IMR-90 (cell line): ENCODE measurements at regions of chr5 and their contacts with region 1.

Region 1: GRCh38 chr5:175246242-175246888 is 197.6 kb downstream of the DRD1 start:
- DNase-seq: peak; percentile 98
- ATAC-seq: peak; percentile 94
- H3K4me3 ChIP-seq: no peak overlapping the region
- H3K27ac ChIP-seq: peak overlapping the region; percentile 66
- H3K4me1 ChIP-seq: peaks cover 4% of the 10 kb centered on the region
- H3K27me3 ChIP-seq: no peaks in the 10 kb centered on the region
- CTCF ChIP-seq: no peak
- POLR2A ChIP-seq: no peak
- RAD21 ChIP-seq: no peak

Region 2: DNA sequence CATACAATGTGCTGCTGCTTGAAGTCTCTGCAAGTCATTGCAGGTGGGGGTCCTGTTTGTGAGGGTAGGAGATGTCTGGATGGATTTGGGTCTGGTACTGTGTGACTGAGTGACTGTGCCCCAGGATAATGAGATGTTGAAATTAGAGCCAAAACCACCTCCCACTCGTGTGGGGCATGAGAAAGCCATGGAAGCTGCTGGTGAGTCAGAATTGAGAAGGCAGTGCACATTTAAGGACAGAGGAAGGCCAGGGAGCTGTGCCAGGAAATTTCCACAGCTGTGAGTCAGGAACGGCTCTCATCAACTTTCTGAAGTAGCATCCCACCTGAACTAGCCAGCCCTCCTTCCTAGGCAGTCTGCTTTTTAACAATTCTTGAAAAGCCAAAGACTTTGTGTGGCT is 32.2 kb before region 1 on chr5:
- CTCF ChIA-PET with region 1: interaction called, 4 read pairs
- POLR2A ChIA-PET with region 1: interaction called, 3 read pairs
- dilution Hi-C with region 1: no loop called
- in situ Hi-C with region 1: no loop called
- intact Hi-C with region 1: loop called (anchors 2 kb)
- DNase-seq: peak; percentile 97
- ATAC-seq: peak; percentile 84
- H3K4me3 ChIP-seq: no peak overlapping the region
- H3K27ac ChIP-seq: no peak overlapping the region
- H3K4me1 ChIP-seq: peaks cover 11% of the 10 kb centered on the region
- H3K27me3 ChIP-seq: no peaks in the 10 kb centered on the region
- CTCF ChIP-seq: no peak
- POLR2A ChIP-seq: no peak
- RAD21 ChIP-seq: no peak

Region 3: GRCh38 chr5:175344331-175345195 is 98.2 kb after region 1 on chr5:
- CTCF ChIA-PET with region 1: no interaction called
- POLR2A ChIA-PET with region 1: no interaction called
- dilution Hi-C with region 1: no loop called
- in situ Hi-C with region 1: no loop called
- intact Hi-C with region 1: loop called (anchors 2 kb)
- DNase-seq: peak; percentile 50
- ATAC-seq: peak; percentile 64
- H3K4me3 ChIP-seq: no peak overlapping the region
- H3K27ac ChIP-seq: no peak overlapping the region
- H3K4me1 ChIP-seq: peaks cover 17% of the 10 kb centered on the region
- H3K27me3 ChIP-seq: no peaks in the 10 kb centered on the region
- CTCF ChIP-seq: 0 out of 2 replicates have a peak, but pooled peaks have one; percentile 5
- POLR2A ChIP-seq: no peak
- RAD21 ChIP-seq: no peak; the same call in 1 of the 2 replicates